ENCODE measurements at regions of chr17 and their contacts with region 1.

Region 1: GRCh38 chr17:49997791-49998703 is 3.0 kb upstream of the DLX3 start:
- DNase-seq: peak; percentile 77
- ATAC-seq: peak; percentile 73
- H3K4me3 ChIP-seq: no peak overlapping the region
- H3K27ac ChIP-seq: no peak overlapping the region
- H3K4me1 ChIP-seq: peaks cover 3% of the 10 kb centered on the region; the same call in 1 of the 2 replicates
- H3K27me3 ChIP-seq: peaks cover 73% of the 10 kb centered on the region
- CTCF ChIP-seq: peak; percentile 93
- POLR2A ChIP-seq: no peak
- RAD21 ChIP-seq: peak; percentile 96

Region 2: DNA sequence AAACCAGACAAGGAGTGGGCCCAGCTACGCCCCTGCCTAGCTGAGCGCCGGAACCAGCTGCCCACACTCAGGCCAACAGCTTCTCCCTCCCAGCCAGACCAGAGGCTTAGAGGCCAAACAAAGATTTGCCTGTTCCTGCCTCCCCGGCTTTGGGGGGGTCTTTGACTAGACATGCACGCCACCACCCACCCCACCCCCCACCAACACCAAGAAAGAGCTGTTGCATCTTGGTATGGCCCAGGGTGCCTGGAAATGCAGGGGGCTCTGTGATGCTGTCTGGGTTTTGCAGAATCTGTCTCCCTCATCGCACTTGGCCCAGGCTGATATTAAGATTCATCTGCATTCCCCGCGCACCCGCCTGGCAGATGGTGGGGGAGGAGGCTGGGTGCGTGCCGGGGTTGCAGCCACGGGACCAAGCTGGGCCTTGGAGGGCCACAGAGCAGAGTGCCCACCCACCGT is 423.7 kb before region 1 on chr17:
- CTCF ChIA-PET with region 1: no interaction called
- POLR2A ChIA-PET with region 1: no interaction called
- dilution Hi-C with region 1: no loop called
- in situ Hi-C with region 1: loop called (anchors 5 kb)
- intact Hi-C with region 1: loop called (anchors 1 kb)
- DNase-seq: no peak
- ATAC-seq: no peak
- H3K4me3 ChIP-seq: no peak overlapping the region
- H3K27ac ChIP-seq: no peak overlapping the region
- H3K4me1 ChIP-seq: peaks cover 4% of the 10 kb centered on the region; the same call in 1 of the 2 replicates
- H3K27me3 ChIP-seq: peaks cover 65% of the 10 kb centered on the region
- CTCF ChIP-seq: no peak
- POLR2A ChIP-seq: no peak
- RAD21 ChIP-seq: no peak

Region 3: DNA sequence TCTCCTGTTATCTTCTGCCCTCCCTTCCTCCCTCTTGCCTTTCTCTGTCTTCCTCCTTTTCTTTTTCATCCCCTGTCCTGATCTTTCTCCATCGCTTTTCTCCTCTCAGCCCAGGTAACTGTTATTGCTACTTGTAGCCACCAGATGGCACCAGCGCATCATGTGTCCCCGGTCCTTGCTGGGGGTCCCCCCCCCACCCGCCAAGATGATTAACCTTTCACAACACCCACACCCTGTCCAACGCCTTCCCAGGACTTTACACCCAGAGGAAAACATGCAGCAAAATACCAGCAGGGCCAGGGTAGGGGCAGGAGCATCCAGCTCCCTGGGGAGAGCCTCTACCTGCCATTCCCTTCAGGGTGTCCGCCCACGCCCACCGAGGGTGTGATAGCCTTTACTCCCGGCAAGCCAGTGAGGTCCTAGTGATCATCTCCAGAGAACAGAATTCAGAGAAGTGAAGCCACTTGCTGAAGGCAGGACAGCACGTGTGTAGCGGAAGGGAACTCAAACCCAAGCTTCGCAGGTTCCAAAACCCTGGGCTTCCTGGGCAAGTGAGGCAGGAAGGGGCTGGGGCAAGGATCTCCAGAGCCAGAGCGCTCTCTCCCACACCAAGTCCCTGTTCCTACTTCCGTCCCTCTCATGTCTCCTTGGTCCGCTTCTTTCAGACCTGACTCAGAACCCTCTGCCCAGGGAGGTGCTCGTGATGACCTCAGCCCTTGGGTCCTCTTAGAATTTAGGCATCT is 136.7 kb before region 1 on chr17:
- CTCF ChIA-PET with region 1: interaction called, 21 read pairs
- POLR2A ChIA-PET with region 1: no interaction called
- dilution Hi-C with region 1: no loop called
- in situ Hi-C with region 1: loop called (anchors 5 kb)
- intact Hi-C with region 1: loop called (anchors 1 kb)
- DNase-seq: peak; percentile 27
- ATAC-seq: peak; percentile 74
- H3K4me3 ChIP-seq: no peak overlapping the region
- H3K27ac ChIP-seq: no peak overlapping the region
- H3K4me1 ChIP-seq: peaks cover 3% of the 10 kb centered on the region; the same call in 1 of the 2 replicates
- H3K27me3 ChIP-seq: peaks cover 41% of the 10 kb centered on the region
- CTCF ChIP-seq: peak; percentile 93
- POLR2A ChIP-seq: no peak
- RAD21 ChIP-seq: peak; percentile 94

Region 4: DNA sequence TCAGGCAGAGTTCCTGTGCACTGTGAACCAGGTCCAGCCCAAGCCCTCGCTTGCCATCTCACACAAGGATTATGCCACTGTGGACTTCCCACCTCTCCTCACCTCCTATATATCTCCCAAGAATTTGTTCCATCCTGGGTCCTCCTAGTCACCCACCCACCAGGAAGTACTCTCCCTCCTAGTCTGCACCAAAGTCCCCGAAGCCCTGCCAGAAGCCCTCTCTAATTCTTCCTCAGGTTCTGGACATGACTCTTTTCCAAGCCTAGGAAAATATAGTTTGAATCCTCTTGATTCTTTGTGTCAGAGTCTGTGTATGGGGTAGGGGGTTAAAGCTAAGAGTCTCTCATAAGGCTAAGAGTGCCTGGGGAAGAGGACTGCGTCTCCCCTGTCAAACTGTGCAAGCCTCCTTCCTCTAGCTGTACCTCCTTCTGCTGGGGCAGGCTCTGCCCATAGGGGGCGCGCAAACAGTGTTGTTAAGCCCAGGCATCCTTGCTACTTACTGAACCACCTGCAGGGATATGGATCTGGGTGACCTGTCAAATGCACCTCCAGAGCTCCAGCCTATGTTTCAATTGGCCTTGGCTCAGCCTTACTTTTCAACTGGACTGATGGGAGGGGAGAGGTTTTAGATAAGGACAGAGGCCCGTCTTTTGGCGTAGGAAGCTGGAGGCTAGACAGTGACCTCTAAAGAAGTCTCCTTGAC is 45.7 kb before region 1 on chr17:
- CTCF ChIA-PET with region 1: interaction called, 3 read pairs
- POLR2A ChIA-PET with region 1: no interaction called
- dilution Hi-C with region 1: no loop called
- in situ Hi-C with region 1: no loop called
- intact Hi-C with region 1: loop called (anchors 5 kb)
- DNase-seq: peak; percentile 40
- ATAC-seq: peak; percentile 85
- H3K4me3 ChIP-seq: no peak overlapping the region
- H3K27ac ChIP-seq: no peak overlapping the region
- H3K4me1 ChIP-seq: no peaks in the 10 kb centered on the region
- H3K27me3 ChIP-seq: peaks cover 79% of the 10 kb centered on the region
- CTCF ChIP-seq: peak; percentile 68
- POLR2A ChIP-seq: no peak
- RAD21 ChIP-seq: peak; percentile 56

Measured in IMR-90 (cell line).